HEK293 (cell line): ENCODE measurements at regions of chr5 and their contacts with region 1.

Region 1: DNA sequence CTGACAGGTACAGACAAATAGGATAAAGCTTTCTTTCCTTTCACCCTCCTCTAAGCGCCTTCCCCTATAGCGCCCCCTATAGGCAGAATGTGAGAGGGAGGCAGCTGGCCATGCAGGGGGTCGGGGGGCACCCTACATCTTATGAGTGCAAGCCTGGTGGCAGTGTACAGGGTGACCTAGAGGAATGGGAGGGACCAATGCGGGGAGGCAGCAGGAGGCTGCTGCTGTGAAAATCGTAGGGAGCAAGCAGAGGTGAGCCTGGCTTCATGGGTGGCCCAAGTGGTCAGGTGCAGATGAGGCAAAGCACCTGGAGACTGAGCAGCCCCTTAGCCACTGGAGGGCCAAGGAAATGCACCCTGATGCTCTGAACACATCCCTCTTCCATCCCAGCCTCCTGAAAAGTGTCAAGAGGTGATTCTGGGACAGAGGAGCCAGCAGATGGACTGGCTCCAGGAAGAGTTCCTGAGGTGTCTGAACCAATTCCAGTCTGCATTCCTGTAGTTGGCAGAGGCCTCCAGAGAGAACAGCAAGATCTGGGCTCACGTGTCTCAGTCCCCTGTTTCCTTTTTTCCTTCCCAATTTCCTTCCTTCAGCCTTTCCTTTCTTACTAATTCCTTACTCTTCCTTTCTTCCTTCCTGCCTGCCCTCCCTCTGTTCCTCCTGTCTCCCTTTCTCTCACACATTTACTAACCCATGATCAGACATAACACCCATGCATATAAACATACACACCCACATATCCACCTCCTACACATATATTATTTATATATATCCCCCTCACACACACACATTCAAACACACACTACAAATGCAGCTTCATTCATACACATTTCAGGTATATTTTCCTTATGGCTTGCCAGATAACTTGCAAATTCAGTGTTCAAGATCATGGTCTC is 32.8 kb upstream of the GALNT10 start:
- H3K4me3 ChIP-seq: no peak overlapping the region
- H3K27ac ChIP-seq: no peak overlapping the region
- H3K4me1 ChIP-seq: no peaks in the 10 kb centered on the region
- CTCF ChIP-seq: peak; percentile 50; the same call in 1 of the 2 replicates

Region 2: DNA sequence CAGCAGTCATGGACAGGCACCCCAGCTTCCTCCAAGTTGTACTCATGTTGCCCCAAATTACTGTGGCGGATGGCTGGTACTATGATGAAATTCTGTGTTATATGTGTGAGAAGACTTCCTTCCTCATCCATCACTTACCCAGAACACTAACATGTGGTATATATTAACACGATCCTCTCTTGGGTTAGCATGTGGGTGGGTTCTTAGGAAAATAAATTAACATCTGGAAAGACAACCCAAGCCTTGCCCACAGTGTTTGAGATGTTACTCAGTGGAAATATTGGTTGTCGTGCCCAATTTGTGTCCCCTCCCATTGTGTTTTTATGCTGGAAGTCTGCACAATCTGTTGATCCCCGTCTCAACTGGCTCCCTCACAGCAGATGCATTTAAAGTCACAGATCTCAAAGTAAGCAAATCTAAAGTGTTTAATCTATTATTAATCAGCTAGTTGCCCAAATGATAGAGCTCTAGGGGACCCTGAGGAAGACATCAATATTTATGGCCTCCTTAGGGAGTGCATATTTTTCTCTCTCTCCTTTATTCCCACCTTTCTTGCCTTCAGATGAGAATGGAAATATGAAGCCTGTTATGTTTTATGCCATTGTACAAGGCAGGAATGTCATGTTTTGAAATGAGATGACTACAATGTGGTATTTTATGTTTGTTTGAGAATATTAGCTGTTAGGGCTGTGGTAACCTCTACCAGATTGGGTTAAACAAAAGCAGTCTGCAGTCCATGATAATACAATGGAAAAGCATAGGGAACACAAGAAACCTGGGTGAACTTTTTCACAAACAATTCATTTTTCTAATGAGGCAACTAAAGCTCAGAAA is 573.4 kb before region 1 on chr5:
- CTCF ChIA-PET with region 1: no interaction called
- POLR2A ChIA-PET with region 1: no interaction called
- H3K4me3 ChIP-seq: no peak overlapping the region
- H3K27ac ChIP-seq: no peak overlapping the region
- H3K4me1 ChIP-seq: no peaks in the 10 kb centered on the region
- CTCF ChIP-seq: no peak

Region 3: DNA sequence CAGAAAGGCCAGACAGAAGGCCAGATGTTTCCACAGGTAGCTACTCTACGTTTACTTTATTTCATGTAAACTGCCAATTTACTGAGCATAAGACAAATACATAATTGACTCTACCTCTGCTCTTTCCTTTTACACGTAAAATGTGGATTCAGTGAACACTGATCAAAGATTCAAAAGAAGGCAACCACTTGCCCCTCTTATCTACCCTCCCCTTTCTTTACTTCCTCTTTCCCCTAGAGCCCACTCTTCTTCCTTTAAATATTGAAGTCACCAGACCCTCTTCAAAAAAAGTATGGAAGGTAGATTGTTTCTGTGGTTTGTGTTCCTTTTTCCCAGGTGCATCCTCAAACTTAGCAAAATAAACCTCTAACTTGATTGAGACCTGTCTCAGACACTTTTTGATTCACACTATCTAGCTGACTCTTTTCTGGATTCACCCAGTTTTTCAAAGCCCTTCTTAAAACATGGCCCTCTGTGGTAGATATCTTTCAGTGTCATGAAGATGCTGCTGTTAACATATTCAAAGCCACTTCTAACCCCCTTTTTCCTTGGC is 125.7 kb before region 1 on chr5:
- CTCF ChIA-PET with region 1: no interaction called
- POLR2A ChIA-PET with region 1: no interaction called
- H3K4me3 ChIP-seq: no peak overlapping the region
- H3K27ac ChIP-seq: no peak overlapping the region
- H3K4me1 ChIP-seq: no peaks in the 10 kb centered on the region
- CTCF ChIP-seq: no peak

Region 4: GRCh38 chr5:154146409-154146808 is 11.3 kb before region 1 on chr5:
- CTCF ChIA-PET with region 1: interaction called, 31 read pairs
- POLR2A ChIA-PET with region 1: no interaction called
- H3K4me3 ChIP-seq: no peak overlapping the region
- H3K27ac ChIP-seq: no peak overlapping the region
- H3K4me1 ChIP-seq: peaks cover 15% of the 10 kb centered on the region
- CTCF ChIP-seq: no peak